ENCODE measurements at regions of chr18 and their contacts with region 1.

Region 1: DNA sequence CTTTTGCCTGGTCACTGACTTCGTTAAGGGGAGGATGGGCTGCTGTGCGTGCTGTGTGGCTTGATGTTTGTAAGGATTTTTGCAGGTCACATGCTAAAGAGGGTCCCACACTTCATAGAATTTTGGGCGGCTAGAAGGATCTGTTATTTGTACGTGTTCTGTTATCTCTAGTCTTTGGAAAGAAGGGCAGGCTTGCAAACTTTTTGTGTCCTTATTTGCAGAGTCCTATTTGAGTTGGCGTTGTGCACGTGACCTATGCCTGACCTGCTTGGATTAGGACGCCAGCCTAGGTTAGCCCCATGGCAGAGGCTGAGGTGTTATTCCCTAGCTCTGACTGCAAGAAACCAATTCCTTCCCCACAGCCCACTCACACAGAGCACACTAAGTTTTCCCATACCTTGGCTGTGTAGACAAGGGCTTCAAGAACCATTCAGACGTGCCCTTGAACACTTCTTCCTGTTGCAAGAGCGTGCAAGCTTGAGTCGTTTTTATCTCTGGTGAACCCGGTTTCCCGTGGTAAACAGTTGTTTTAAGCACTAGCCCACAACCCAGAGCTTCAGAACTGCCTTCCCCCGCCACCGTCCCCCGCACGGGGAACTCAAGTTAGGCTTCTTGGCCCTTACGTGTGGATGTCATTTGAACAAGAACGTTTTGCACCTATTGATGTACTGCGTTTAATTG is 94.6 kb downstream of the LDLRAD4 start:
- DNase-seq: peak in 34 of 35 experiments; percentile 9 to 70 (median 46)
- ATAC-seq: peak; percentile 88 to 93 (median 92)
- H3K4me3 ChIP-seq: no peak overlapping the region
- H3K4me3 Mint-ChIP-seq: peak overlapping the region in 2 of 3 donors; percentile 25 to 64
- H3K27ac ChIP-seq: peak overlapping the region; percentile 21
- H3K27ac Mint-ChIP-seq: peak overlapping the region; percentile 85 to 92
- H3K4me1 ChIP-seq: peaks cover 22 to 32% of the 10 kb centered on the region in 2 experiments
- H3K4me1 Mint-ChIP-seq: peaks cover 40 to 48% (median 45%) of the 10 kb centered on the region in 3 donors
- H3K27me3 ChIP-seq: no peaks in the 10 kb centered on the region
- H3K27me3 Mint-ChIP-seq: no peaks in the 10 kb centered on the region

Region 2: GRCh38 chr18:12470382-12471075 is 842.6 kb before region 1 on chr18:
- CTCF ChIA-PET with region 1: no interaction called
- POLR2A ChIA-PET with region 1: no interaction called
- DNase-seq: no peak
- ATAC-seq: no peak
- H3K4me3 ChIP-seq: no peak overlapping the region
- H3K4me3 Mint-ChIP-seq: no peak overlapping the region
- H3K27ac ChIP-seq: no peak overlapping the region
- H3K27ac Mint-ChIP-seq: no peak overlapping the region
- H3K4me1 ChIP-seq: no peaks in the 10 kb centered on the region
- H3K4me1 Mint-ChIP-seq: no peaks in the 10 kb centered on the region
- H3K27me3 ChIP-seq: no peaks in the 10 kb centered on the region
- H3K27me3 Mint-ChIP-seq: no peaks in the 10 kb centered on the region

Region 3: GRCh38 chr18:13265008-13265910 is 47.9 kb before region 1 on chr18:
- CTCF ChIA-PET with region 1: no interaction called
- POLR2A ChIA-PET with region 1: interaction called in 1 of 2 experiments, 14 read pairs
- DNase-seq: no peak
- ATAC-seq: no peak
- H3K4me3 ChIP-seq: peak overlapping the region in 1 of 2 donors; percentile 20
- H3K4me3 Mint-ChIP-seq: peak overlapping the region; percentile 53 to 72 (median 66)
- H3K27ac ChIP-seq: no peak overlapping the region
- H3K27ac Mint-ChIP-seq: peak overlapping the region; percentile 85 to 88
- H3K4me1 ChIP-seq: peaks cover 37 to 59% of the 10 kb centered on the region in 2 experiments
- H3K4me1 Mint-ChIP-seq: peaks cover 69 to 74% (median 72%) of the 10 kb centered on the region in 3 donors
- H3K27me3 ChIP-seq: peaks cover 0 to 12% of the 10 kb centered on the region in 2 experiments
- H3K27me3 Mint-ChIP-seq: peaks cover 0 to 2% of the 10 kb centered on the region in 2 donors

Region 4: DNA sequence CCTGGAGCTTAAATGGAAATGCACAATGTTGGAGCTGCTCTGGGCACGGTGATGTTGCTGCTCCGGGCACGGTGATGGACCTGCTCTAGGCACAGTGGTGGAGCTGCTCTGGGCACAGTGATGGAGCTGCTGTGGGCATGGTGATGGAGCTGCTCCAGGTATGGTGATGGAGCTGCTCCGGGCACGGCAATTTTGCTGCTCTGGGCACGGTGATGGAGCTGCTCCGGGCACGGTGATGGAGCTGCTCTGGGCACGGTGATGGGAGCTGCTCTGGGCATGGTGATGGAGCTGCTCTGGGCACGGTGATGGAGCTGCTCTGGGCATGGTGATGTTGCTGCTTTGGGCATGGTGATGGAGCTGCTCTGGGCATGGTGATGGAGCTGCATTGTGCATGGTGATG is 14.9 kb before region 1 on chr18:
- CTCF ChIA-PET with region 1: interaction called in 1 of 2 experiments, 11 read pairs
- POLR2A ChIA-PET with region 1: no interaction called
- DNase-seq: no peak
- ATAC-seq: no peak
- H3K4me3 ChIP-seq: no peak overlapping the region
- H3K4me3 Mint-ChIP-seq: no peak overlapping the region
- H3K27ac ChIP-seq: no peak overlapping the region
- H3K27ac Mint-ChIP-seq: peak overlapping the region in 1 of 2 donors; percentile 36
- H3K4me1 ChIP-seq: peaks cover 5 to 23% of the 10 kb centered on the region in 2 experiments
- H3K4me1 Mint-ChIP-seq: peaks cover 22 to 34% (median 28%) of the 10 kb centered on the region in 3 donors
- H3K27me3 ChIP-seq: no peaks in the 10 kb centered on the region
- H3K27me3 Mint-ChIP-seq: peaks cover 0 to under 1% of the 10 kb centered on the region in 2 donors

Region 5: GRCh38 chr18:13388586-13389490 is 75.7 kb after region 1 on chr18:
- CTCF ChIA-PET with region 1: interaction called in 1 of 2 experiments, 15 read pairs
- POLR2A ChIA-PET with region 1: no interaction called
- DNase-seq: no peak
- ATAC-seq: no peak
- H3K4me3 ChIP-seq: no peak overlapping the region
- H3K4me3 Mint-ChIP-seq: no peak overlapping the region
- H3K27ac ChIP-seq: no peak overlapping the region
- H3K27ac Mint-ChIP-seq: no peak overlapping the region
- H3K4me1 ChIP-seq: peaks cover 2 to 10% of the 10 kb centered on the region in 2 experiments
- H3K4me1 Mint-ChIP-seq: peaks cover 28 to 51% (median 42%) of the 10 kb centered on the region in 3 donors
- H3K27me3 ChIP-seq: no peaks in the 10 kb centered on the region
- H3K27me3 Mint-ChIP-seq: no peaks in the 10 kb centered on the region

Measured in T-cell (primary cell).